AG04449 (cell line): ENCODE measurements at regions of chr12 and their contacts with region 1.

Region 1: DNA sequence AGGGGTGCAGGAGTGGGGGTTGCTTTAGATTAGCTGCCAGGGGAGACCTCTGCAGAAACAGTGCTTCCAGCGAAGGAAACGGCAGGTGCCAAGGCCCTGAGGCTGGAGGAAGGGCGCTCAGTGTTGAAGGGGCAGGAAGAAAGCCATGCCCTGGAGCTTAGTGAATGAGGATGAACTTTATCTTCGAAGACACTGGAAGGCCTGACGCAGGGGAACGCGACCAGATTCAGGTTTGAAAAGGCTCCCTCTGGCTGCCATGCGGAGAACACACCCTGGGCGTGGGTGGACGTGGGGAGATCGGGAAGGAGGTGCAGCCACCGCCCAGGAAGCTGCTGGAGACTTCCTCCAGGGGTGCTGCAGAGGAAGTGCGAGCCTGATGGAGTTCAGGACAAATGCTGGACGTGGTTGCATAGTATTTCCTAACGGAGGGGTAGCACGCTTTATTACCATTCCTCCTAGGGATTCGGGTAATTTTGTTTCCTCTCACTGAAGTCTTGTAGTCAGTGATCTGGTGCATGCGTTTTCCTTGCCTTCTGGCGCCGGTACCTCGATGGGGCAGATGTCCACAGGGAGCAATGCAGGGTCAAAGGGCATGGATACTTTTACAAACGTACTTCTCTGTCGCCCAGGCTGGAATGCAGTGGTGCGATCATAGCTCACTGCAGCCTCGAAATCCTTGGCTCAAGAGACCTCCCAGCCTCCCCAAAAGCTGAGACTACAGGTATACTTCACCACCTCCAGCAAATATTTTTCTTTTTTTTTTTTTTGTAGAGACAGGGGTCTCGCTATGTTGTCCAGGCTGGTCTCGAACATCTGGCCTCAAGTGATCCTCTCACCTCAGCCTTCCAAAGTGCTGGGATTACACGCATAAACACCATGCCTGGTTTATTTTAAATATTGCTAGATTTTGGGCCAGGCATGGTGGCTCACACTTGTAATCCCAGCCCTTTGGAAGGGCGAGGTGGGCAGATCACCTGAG is 26.4 kb upstream of the UBC start:
- DNase-seq: no peak
- H3K4me3 ChIP-seq: peak overlapping the region; percentile 45
- CTCF ChIP-seq: peak; percentile 91

Region 2: GRCh38 chr12:124727264-124727721 is 213.5 kb before region 1 on chr12:
- CTCF ChIA-PET with region 1: no interaction called
- POLR2A ChIA-PET with region 1: no interaction called
- DNase-seq: no peak
- H3K4me3 ChIP-seq: no peak overlapping the region
- CTCF ChIP-seq: no peak

Region 3: GRCh38 chr12:124917135-124917840 is 23.6 kb before region 1 on chr12:
- CTCF ChIA-PET with region 1: interaction called, 13 read pairs
- POLR2A ChIA-PET with region 1: interaction called, 52 read pairs
- DNase-seq: peak; percentile 98
- H3K4me3 ChIP-seq: peak overlapping the region; percentile 40
- CTCF ChIP-seq: no peak

Region 4: GRCh38 chr12:124927201-124928094 is 13.4 kb before region 1 on chr12:
- CTCF ChIA-PET with region 1: interaction called, 30 read pairs
- POLR2A ChIA-PET with region 1: interaction called, 10 read pairs
- DNase-seq: no peak
- H3K4me3 ChIP-seq: peak overlapping the region; percentile 80
- CTCF ChIP-seq: no peak

Region 5: DNA sequence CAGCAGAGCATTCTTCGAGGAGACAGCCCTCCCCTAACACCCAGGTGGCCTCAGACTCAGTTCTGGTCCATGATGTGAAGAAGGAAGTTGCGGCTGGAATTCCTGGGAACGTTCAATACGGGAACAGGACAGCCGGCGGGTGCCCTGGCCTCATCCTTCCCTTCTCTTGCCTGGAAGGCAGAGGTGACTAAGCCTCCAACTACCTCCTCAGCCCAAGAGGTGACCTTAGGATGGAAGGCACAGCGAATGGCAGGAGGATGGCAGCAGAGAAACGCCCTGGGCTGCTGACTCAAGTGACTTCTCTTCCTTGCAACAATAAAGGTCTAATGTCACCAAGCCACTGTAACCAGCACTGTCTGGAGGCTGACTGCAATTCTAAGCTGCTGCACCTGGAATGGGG is 12.0 kb after region 1 on chr12:
- CTCF ChIA-PET with region 1: interaction called, 33 read pairs
- POLR2A ChIA-PET with region 1: interaction called, 3 read pairs
- DNase-seq: no peak
- H3K4me3 ChIP-seq: no peak overlapping the region
- CTCF ChIP-seq: no peak